Activated naive CD4-positive, alpha-beta T cell treated with anti-CD3 and anti-CD28 coated beads, Interleukin-2, amount 10 ng/mL, durations not matched to agents 7 days and 5 days (primary cell): ENCODE measurements at regions of chr15 and their contacts with region 1.

Region 1: DNA sequence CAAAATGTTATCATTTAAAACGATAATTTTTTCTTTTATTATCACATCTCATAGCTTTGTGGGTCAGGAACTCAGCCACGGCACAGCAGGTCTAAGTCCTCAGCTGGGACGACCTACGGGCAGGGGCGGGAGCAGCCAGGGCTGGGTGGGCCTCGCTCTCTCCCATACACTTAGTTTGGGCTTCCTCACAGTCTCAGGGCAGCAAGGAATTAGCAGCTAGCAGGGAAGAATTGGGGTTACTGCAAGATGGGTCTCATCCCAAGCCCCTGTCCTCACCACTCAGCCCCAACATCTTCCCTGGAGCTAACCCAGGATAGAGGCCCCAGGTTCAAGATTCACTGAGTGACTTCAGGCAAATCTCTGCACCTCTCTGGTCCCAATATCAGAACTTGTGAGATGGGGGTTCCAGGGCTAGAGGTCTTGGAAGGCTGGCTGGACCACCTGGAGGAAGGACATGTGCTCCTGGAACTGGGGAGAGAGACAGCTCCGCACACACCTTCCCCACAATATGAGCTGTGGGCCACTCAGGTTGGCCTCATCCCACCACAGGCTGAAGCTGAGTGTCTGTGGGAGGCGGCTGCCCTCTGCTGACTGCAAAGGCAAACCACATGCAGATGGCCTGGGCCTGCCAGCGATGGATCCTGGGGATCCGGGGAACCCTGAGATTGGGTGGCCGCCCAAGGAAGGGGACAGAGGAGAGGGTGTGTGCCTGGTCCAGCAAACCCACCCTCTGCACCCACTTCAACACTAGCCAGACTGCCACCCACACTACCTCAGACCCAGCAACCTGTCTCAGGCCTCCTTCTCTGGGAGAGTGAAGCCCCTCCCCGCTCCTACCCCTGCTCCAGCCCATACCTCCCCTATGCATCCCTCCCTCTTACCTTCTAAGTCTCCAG is 45.0 kb downstream of the CYP11A1 start:
- DNase-seq: peak; percentile 75
- H3K4me3 Mint-ChIP-seq: no peak overlapping the region
- H3K27ac Mint-ChIP-seq: no peak overlapping the region
- H3K4me1 Mint-ChIP-seq: peaks cover 20% of the 10 kb centered on the region
- H3K27me3 Mint-ChIP-seq: peaks cover 15% of the 10 kb centered on the region

Region 2: DNA sequence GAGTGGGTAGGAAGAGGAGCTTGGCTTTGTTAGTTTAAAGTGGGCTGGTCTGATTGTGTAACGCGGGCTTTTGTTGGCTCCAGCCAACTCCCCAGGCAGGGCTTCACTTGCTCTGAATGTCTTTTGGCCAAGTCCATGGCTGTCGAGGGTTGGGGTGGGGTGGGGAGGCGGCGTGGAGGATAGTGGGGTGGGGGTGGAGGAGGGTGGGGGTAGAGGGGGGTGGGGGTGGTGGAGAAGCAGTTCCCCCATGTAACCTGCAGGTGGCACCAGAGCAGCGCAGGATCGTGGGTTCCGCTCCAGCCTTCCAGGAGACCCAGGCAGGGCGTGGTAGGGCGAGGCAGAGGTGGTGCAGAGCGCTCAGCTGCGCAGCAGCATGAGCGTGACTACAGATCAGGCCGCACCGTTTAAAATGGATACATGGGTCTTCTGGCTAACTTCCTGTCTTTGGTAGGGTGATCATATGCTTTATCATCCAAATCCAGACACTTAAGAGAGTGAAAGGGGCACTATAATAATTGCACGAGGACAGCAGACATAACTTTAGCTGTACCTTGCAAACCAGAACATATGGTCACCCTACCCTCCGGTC is 268.4 kb before region 1 on chr15:
- CTCF ChIA-PET with region 1: interaction called, 18 read pairs
- DNase-seq: peak; percentile 83
- H3K4me3 Mint-ChIP-seq: no peak overlapping the region
- H3K27ac Mint-ChIP-seq: no peak overlapping the region
- H3K4me1 Mint-ChIP-seq: peaks cover 15% of the 10 kb centered on the region
- H3K27me3 Mint-ChIP-seq: peaks cover 4% of the 10 kb centered on the region

Region 3: GRCh38 chr15:74127260-74127953 is 195.0 kb before region 1 on chr15:
- CTCF ChIA-PET with region 1: interaction called, 11 read pairs
- DNase-seq: peak; percentile 88
- H3K4me3 Mint-ChIP-seq: no peak overlapping the region
- H3K27ac Mint-ChIP-seq: peak overlapping the region; percentile 65
- H3K4me1 Mint-ChIP-seq: peaks cover 13% of the 10 kb centered on the region
- H3K27me3 Mint-ChIP-seq: peaks cover 94% of the 10 kb centered on the region

Region 4: DNA sequence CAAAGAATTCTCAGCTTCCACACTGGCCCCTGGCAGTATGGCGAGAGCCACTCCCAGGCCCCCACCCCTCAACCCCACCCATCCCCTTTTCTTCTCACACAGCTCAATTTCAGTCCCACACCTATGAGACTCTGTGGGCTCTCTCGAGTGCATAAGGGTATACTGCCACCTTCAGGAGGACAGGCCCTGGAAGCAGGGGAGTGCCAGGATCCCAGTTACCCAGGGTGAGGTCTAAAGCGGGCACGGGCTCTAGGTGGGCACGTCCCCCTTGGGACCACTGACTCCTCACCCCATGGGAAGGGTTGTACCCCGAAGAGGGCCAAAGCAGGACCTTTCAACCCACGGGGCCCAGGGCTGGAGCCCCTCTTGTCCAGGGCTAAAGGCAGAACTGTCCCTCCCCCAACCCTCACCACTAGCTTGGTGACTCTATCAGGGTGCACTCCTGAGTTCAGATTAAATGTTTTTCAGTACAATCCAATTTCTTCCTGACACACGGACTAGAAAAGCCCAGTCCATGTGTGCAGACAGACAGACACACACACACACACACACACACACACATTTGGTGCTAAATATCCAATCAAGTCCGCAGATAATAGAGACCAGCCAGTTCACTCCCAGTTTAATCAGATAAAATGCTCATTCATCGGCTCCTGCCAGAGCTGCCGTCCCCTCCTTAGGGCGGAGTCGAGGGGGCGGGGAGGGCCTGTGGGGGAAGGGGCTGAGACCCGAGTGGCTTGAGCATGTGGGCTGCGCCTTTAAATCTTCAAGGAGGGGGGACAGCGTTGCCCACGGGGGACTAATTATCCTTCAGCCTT is 14.4 kb before region 1 on chr15:
- CTCF ChIA-PET with region 1: interaction called, 15 read pairs
- DNase-seq: peak; percentile 57
- H3K4me3 Mint-ChIP-seq: no peak overlapping the region
- H3K27ac Mint-ChIP-seq: peak overlapping the region; percentile 25
- H3K4me1 Mint-ChIP-seq: no peaks in the 10 kb centered on the region
- H3K27me3 Mint-ChIP-seq: peaks cover 76% of the 10 kb centered on the region